ENCODE measurements at regions of chr17 and their contacts with region 1.

Region 1: DNA sequence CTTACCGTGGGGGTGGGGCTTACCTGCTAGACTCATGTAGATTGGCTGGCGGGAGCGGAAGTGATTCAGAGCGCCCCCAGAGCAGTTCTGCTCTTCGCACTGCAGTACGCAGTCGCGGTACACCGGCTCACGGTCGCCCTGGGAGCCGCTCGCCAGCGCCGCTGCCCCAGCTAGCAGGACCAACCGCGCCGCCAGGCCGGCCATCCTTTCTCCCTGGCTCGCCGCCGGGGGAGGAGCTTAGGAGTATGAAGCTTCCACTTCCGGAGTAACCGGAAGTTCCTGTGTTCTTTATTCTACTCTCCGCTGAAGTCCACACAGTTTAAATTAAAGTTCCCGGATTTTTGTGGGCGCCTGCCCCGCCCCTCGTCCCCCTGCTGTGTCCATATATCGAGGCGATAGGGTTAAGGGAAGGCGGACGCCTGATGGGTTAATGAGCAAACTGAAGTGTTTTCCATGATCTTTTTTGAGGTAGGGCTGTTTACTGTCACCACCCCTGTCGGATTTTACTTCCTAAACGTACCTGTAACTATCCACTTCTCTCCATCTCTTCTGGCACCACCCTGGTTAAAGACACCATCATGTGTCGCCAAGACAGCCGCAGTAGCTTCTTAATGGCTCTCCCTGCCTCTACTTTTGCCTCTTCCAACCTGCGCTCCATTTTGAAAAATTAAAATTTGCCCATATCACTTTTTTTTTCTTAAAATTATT is at the start of gene PGAP3:
- DNase-seq: peak; percentile 71 to 86 (median 83)
- ATAC-seq: peak; percentile 95
- H3K4me3 ChIP-seq: peak within 1 kb of the TSS; percentile 93
- H3K4me3 Mint-ChIP-seq: peak within 1 kb of the TSS; percentile 87 to 99 (median 98)
- H3K27ac ChIP-seq: peak within 1 kb of the TSS; percentile 77
- H3K27ac Mint-ChIP-seq: peak within 1 kb of the TSS; percentile 93 to 99 (median 98)
- H3K4me1 ChIP-seq: peaks cover 8 to 18% of the 10 kb centered on the region in 2 donors
- H3K4me1 Mint-ChIP-seq: peaks cover 19 to 32% (median 30%) of the 10 kb centered on the region in 7 donors
- H3K27me3 ChIP-seq: no peaks in the 10 kb centered on the region
- H3K27me3 Mint-ChIP-seq: no peaks in the 10 kb centered on the region
- total RNA-seq, gene PGAP3: 26.3 to 39.9 (median 35.1) TPM

Region 2: GRCh38 chr17:39659279-39660010 is 28.5 kb before region 1 on chr17:
- CTCF ChIA-PET with region 1: no interaction called
- POLR2A ChIA-PET with region 1: interaction called, 12 read pairs
- intact Hi-C with region 1: no loop called
- DNase-seq: peak in 3 of 9 donors; percentile 27 to 38 (median 29)
- ATAC-seq: peak; percentile 29
- H3K4me3 ChIP-seq: no peak overlapping the region
- H3K4me3 Mint-ChIP-seq: peak overlapping the region in 9 of 10 donors; percentile 38 to 81 (median 60)
- H3K27ac ChIP-seq: peak overlapping the region; percentile 55
- H3K27ac Mint-ChIP-seq: peak overlapping the region; percentile 71 to 93 (median 90)
- H3K4me1 ChIP-seq: peaks cover 0 to 30% of the 10 kb centered on the region in 2 donors
- H3K4me1 Mint-ChIP-seq: peaks cover 19 to 57% (median 44%) of the 10 kb centered on the region in 7 donors
- H3K27me3 ChIP-seq: no peaks in the 10 kb centered on the region
- H3K27me3 Mint-ChIP-seq: no peaks in the 10 kb centered on the region

Region 3: GRCh38 chr17:39677542-39678339 is 10.2 kb before region 1 on chr17:
- CTCF ChIA-PET with region 1: interaction called, 14 read pairs
- POLR2A ChIA-PET with region 1: interaction called, 43 read pairs
- intact Hi-C with region 1: loop called in 1 of 2 experiments (anchors 1 kb)
- DNase-seq: no peak
- ATAC-seq: no peak
- H3K4me3 ChIP-seq: no peak overlapping the region
- H3K4me3 Mint-ChIP-seq: peak overlapping the region in 1 of 10 donors; percentile 57
- H3K27ac ChIP-seq: no peak overlapping the region
- H3K27ac Mint-ChIP-seq: peak overlapping the region; percentile 10 to 97 (median 79)
- H3K4me1 ChIP-seq: peaks cover 45 to 65% of the 10 kb centered on the region in 2 donors
- H3K4me1 Mint-ChIP-seq: peaks cover 33 to 62% (median 53%) of the 10 kb centered on the region in 7 donors
- H3K27me3 ChIP-seq: no peaks in the 10 kb centered on the region
- H3K27me3 Mint-ChIP-seq: no peaks in the 10 kb centered on the region

Region 4: GRCh38 chr17:39769974-39770587 is 82.1 kb after region 1 on chr17:
- CTCF ChIA-PET with region 1: no interaction called
- POLR2A ChIA-PET with region 1: no interaction called
- intact Hi-C with region 1: no loop called
- DNase-seq: peak in 7 of 9 donors; percentile 46 to 81 (median 63)
- ATAC-seq: peak; percentile 81
- H3K4me3 ChIP-seq: no peak overlapping the region
- H3K4me3 Mint-ChIP-seq: peak overlapping the region; percentile 29 to 83 (median 57)
- H3K27ac ChIP-seq: peak overlapping the region; percentile 71
- H3K27ac Mint-ChIP-seq: peak overlapping the region; percentile 78 to 98 (median 94)
- H3K4me1 ChIP-seq: peaks cover 77 to 92% of the 10 kb centered on the region in 2 donors
- H3K4me1 Mint-ChIP-seq: peaks cover 73 to 99% (median 98%) of the 10 kb centered on the region in 7 donors
- H3K27me3 ChIP-seq: no peaks in the 10 kb centered on the region
- H3K27me3 Mint-ChIP-seq: no peaks in the 10 kb centered on the region